ENCODE measurements at regions of chr2 and their contacts with region 1.

Region 1: GRCh38 chr2:73736855-73737779 is at the start of gene TPRKB:
- DNase-seq: peak; percentile 95 to 98
- ATAC-seq: peak; percentile 99 to 100 (median 100)
- H3K4me3 ChIP-seq: peak within 1 kb of the TSS; percentile 48 to 98 (median 82)
- H3K27ac ChIP-seq: peak within 1 kb of the TSS; percentile 19 to 91 (median 82)
- H3K4me1 ChIP-seq: peaks cover 0 to 21% (median 20%) of the 10 kb centered on the region in 9 donors
- H3K27me3 ChIP-seq: no peaks in the 10 kb centered on the region
- CTCF ChIP-seq: no peak
- total RNA-seq, gene TPRKB: 17.1 to 42.3 (median 20.7) TPM

Region 2: GRCh38 chr2:73107211-73107926 is 629.7 kb before region 1 on chr2:
- intact Hi-C with region 1: no loop called
- DNase-seq: peak in 1 of 2 donors; percentile 45
- ATAC-seq: peak; percentile 23 to 81 (median 58)
- H3K4me3 ChIP-seq: no peak overlapping the region
- H3K27ac ChIP-seq: peak overlapping the region in 8 of 10 donors; percentile 27 to 74 (median 56)
- H3K4me1 ChIP-seq: peaks cover 25 to 89% (median 58%) of the 10 kb centered on the region in 9 donors
- H3K27me3 ChIP-seq: peaks cover 0 to 20% (median 0%) of the 10 kb centered on the region in 7 donors
- CTCF ChIP-seq: no peak

Region 3: DNA sequence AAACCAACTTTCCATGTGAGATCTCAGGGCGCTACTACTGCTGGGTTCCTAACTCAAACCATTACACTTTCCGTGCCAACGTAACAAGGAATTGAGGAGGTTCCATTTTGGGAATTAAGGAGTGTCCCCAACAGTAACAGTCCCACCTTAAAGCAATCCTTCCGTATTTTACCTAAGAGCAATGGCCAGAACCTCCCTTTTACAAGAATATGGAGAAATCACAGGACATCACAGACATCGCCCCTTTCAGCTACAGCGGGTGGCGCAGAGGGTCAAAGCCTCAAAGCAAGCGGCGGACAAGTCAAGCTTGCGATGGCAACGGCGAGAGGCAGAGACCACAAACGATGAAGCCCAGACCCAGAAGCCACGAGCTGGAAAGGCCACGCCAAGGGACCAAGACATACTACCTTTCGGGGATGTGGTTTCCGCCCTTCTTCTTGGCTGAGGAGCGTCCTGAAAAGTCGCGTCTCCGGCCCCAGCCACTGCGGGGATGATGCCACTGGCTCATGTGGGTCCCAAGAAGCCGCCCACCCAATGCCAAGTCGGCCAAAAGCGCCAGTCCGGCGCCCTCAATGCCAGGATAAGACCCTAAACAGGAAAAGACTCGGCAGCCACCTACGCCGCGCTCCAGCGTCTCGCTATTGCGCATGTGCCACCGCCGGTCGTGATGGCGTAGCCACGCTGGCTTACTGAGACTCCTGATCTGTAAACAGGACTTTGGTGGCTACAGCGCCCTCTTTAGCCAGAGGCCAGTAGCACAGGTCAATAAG is 42.5 kb after region 1 on chr2 and contains the start of gene DUSP11:
- intact Hi-C with region 1: loop called in 1 of 10 experiments (anchors 1 kb)
- DNase-seq: peak; percentile 95 to 96
- ATAC-seq: peak; percentile 98 to 100 (median 100)
- H3K4me3 ChIP-seq: peak within 1 kb of the TSS; percentile 56 to 97 (median 83)
- H3K27ac ChIP-seq: peak within 1 kb of the TSS; percentile 68 to 97 (median 92)
- H3K4me1 ChIP-seq: peaks cover 4 to 31% (median 16%) of the 10 kb centered on the region in 9 donors
- H3K27me3 ChIP-seq: no peaks in the 10 kb centered on the region
- CTCF ChIP-seq: peak; percentile 85 to 99 (median 91)
- total RNA-seq, gene DUSP11: 9.2 to 11.6 (median 10.8) TPM

Measured in heart right ventricle (tissue), 16 donors.